CD14-positive monocyte (primary cell): ENCODE measurements at regions of chr3 and their contacts with region 1.

Region 1: DNA sequence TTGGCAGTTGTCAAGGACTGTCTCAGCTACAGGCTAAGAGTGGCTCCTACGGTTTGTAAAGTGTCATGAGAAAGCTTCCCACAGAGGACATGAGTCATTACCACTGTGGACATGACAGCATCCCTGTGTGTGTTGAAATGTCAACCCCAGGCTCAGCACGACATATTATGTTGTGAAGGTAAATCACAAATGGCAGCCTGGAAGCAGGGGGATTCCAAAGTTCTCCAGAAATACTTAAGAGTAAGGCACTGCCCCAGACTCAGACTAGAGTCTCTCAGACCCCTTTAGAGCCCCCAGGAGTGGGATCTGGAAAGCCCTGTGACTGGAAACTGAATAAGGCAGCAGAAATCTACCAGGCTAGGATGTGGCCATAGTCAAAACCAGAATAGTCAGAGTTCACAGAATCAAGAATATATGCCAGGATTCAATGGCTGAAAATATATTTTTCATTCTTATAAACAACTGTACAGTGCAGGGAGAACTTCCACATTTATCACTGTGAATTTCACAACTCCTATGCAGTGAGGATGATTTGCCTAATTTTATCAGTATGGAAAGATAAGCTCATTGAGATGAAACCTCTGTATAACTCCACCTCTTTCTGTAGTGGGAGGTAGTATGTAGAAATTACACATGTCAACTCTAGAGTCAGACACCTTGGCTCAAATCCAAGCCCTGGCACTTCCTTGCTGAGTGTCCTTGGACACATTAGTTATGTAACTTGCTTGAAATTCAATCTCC is 237.1 kb upstream of the CFAP20DC start:
- DNase-seq: peak; percentile 91 to 99 (median 95)
- H3K4me3 ChIP-seq: peak overlapping the region in 1 of 3 experiments; percentile 16
- H3K4me3 Mint-ChIP-seq: peak overlapping the region; percentile 13 to 62
- H3K27ac ChIP-seq: peak overlapping the region; percentile 89 to 98
- H3K27ac Mint-ChIP-seq: peak overlapping the region; percentile 98 to 100 (median 99)
- H3K4me1 ChIP-seq: peaks cover 25 to 26% of the 10 kb centered on the region in 2 donors
- H3K4me1 Mint-ChIP-seq: peaks cover 34% of the 10 kb centered on the region
- H3K27me3 ChIP-seq: no peaks in the 10 kb centered on the region
- H3K27me3 Mint-ChIP-seq: peaks cover 0 to under 1% (median 0%) of the 10 kb centered on the region in 3 donors
- CTCF ChIP-seq: no peak

Region 2: GRCh38 chr3:59017617-59017984 is 269.4 kb before region 1 on chr3:
- intact Hi-C with region 1: no loop called
- DNase-seq: no peak
- H3K4me3 ChIP-seq: no peak overlapping the region
- H3K4me3 Mint-ChIP-seq: no peak overlapping the region
- H3K27ac ChIP-seq: no peak overlapping the region
- H3K27ac Mint-ChIP-seq: no peak overlapping the region
- H3K4me1 ChIP-seq: no peaks in the 10 kb centered on the region
- H3K4me1 Mint-ChIP-seq: no peaks in the 10 kb centered on the region
- H3K27me3 ChIP-seq: no peaks in the 10 kb centered on the region
- H3K27me3 Mint-ChIP-seq: no peaks in the 10 kb centered on the region
- CTCF ChIP-seq: no peak

Region 3: GRCh38 chr3:59245859-59246501 is 41.0 kb before region 1 on chr3:
- intact Hi-C with region 1: loop called in 1 of 2 experiments (anchors 5 kb)
- DNase-seq: no peak
- H3K4me3 ChIP-seq: no peak overlapping the region
- H3K4me3 Mint-ChIP-seq: no peak overlapping the region
- H3K27ac ChIP-seq: peak overlapping the region in 1 of 2 donors; percentile 55
- H3K27ac Mint-ChIP-seq: peak overlapping the region in 4 of 7 donors; percentile 14 to 59 (median 50)
- H3K4me1 ChIP-seq: peaks cover 47 to 51% of the 10 kb centered on the region in 2 donors
- H3K4me1 Mint-ChIP-seq: peaks cover 53% of the 10 kb centered on the region
- H3K27me3 ChIP-seq: no peaks in the 10 kb centered on the region
- H3K27me3 Mint-ChIP-seq: peaks cover 0 to 2% (median 0%) of the 10 kb centered on the region in 3 donors
- CTCF ChIP-seq: no peak